ENCODE measurements at regions of chr1 and their contacts with region 1.

Region 1: GRCh38 chr1:52613636-52614373 is 11.6 kb downstream of the GPX7 start:
- DNase-seq: no peak
- ATAC-seq: no peak
- H3K4me3 Mint-ChIP-seq: no peak overlapping the region
- H3K27ac Mint-ChIP-seq: peak overlapping the region; percentile 57
- H3K4me1 Mint-ChIP-seq: peaks cover 13% of the 10 kb centered on the region
- H3K27me3 Mint-ChIP-seq: no peaks in the 10 kb centered on the region
- CTCF ChIP-seq: no peak

Region 2: GRCh38 chr1:50705699-50706098 is 1908.1 kb before region 1 on chr1:
- CTCF ChIA-PET with region 1: no interaction called
- POLR2A ChIA-PET with region 1: no interaction called
- intact Hi-C with region 1: no loop called
- DNase-seq: no peak
- ATAC-seq: no peak
- H3K4me3 Mint-ChIP-seq: no peak overlapping the region
- H3K27ac Mint-ChIP-seq: no peak overlapping the region
- H3K4me1 Mint-ChIP-seq: peaks cover 4% of the 10 kb centered on the region
- H3K27me3 Mint-ChIP-seq: no peaks in the 10 kb centered on the region
- CTCF ChIP-seq: no peak

Region 3: GRCh38 chr1:52574594-52574993 is 39.2 kb before region 1 on chr1:
- CTCF ChIA-PET with region 1: no interaction called
- POLR2A ChIA-PET with region 1: no interaction called
- intact Hi-C with region 1: no loop called
- DNase-seq: no peak
- ATAC-seq: no peak
- H3K4me3 Mint-ChIP-seq: no peak overlapping the region
- H3K27ac Mint-ChIP-seq: no peak overlapping the region
- H3K4me1 Mint-ChIP-seq: peaks cover 12% of the 10 kb centered on the region
- H3K27me3 Mint-ChIP-seq: no peaks in the 10 kb centered on the region
- CTCF ChIP-seq: no peak

Region 4: DNA sequence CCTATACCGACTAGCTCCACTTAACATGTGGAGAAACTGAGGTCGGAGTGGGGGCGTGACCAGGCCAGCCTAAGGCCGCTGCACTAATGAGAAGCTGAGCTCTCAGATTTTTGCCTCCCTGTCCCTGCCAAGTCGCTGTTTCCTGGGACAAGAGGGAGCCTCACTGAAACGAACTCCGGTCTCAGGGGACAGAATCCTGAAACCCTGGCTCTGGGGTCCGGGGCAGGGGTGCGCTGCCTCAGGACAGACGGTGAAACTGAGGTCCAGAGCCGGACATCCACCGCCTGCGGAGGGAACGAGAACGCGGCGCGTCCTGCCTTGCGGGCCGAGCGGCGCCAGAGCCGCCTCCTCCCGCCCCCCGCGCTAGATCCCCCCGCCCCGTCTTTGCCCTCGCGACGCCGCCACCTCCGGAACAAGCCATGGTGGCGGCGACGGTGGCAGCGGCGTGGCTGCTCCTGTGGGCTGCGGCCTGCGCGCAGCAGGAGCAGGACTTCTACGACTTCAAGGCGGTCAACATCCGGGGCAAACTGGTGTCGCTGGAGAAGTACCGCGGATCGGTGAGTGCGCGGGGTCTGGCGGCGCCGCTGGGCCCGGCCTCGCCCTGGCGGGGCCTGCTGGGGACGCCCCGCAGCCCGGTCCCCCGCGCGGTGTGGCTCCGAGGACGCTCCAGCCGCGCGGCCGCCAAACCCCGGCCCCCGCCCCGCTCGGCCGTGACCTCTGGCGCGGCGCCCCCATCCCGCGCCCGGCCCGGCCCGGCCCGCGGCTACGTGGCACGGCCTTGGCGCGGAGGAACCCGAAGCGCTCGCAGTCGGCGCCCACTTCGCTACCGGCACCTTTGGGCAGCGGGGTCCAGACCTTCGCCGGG is 11.6 kb before region 1 on chr1 and contains the start of gene GPX7:
- CTCF ChIA-PET with region 1: no interaction called
- POLR2A ChIA-PET with region 1: interaction called, 10 read pairs
- intact Hi-C with region 1: no loop called
- DNase-seq: peak; percentile 57
- ATAC-seq: peak; percentile 75
- H3K4me3 Mint-ChIP-seq: peak within 1 kb of the TSS; percentile 84
- H3K27ac Mint-ChIP-seq: peak within 1 kb of the TSS; percentile 84
- H3K4me1 Mint-ChIP-seq: peaks cover 55% of the 10 kb centered on the region
- H3K27me3 Mint-ChIP-seq: no peaks in the 10 kb centered on the region
- CTCF ChIP-seq: no peak
- total RNA-seq, gene GPX7: 20.9 and 22.4 TPM in 2 replicates

Measured in activated B cell treated with CpG ODN at 0.5 μM for 24 hours (primary cell).